CD8-positive, alpha-beta T cell (primary cell): ENCODE measurements at regions of chr4 and their contacts with region 1.

Region 1: DNA sequence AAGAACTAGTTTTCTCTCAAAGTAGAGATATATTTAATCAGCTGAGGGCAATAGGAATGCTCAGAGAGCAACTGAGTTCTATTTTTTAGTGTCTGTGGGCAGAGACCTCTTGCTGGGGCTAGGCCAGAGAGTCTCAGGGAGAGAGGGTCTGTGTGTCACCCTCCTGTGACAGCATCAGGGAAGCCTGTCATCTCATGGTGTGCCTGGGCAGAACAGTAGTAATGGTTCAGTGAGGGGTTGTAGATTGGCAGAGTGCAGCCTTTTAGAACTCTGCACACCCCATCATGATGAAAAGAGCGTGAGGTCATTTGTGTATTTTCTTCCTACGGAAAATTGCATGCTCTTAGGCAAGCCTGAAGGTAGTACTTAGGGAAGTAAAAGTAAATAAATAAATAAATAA is 1396.5 kb upstream of the AGA start:
- DNase-seq: no peak
- ATAC-seq: no peak
- H3K4me3 ChIP-seq: no peak overlapping the region
- H3K4me3 Mint-ChIP-seq: no peak overlapping the region
- H3K27ac ChIP-seq: no peak overlapping the region
- H3K27ac Mint-ChIP-seq: no peak overlapping the region
- H3K4me1 ChIP-seq: no peaks in the 10 kb centered on the region
- H3K4me1 Mint-ChIP-seq: no peaks in the 10 kb centered on the region
- H3K27me3 ChIP-seq: no peaks in the 10 kb centered on the region
- H3K27me3 Mint-ChIP-seq: no peaks in the 10 kb centered on the region
- CTCF ChIP-seq: no peak

Region 2: DNA sequence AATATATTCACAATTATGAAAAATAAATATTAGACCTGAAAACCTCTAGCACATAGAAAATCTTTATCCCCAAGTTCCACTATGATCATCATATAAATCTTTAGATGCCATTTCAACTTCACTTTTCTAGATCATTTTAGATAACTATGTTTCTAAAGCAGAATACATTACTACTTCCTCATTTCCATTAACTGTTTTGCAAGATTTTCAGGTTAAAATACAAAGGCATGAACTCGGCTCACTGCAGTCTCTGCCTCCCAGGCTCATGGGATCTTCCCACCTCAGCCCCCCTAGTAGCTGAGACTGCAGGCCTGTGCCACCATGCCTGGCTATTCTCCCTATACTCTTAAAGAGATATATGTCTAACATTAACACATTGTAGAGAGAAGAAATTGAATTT is 30.7 kb before region 1 on chr4:
- CTCF ChIA-PET with region 1: no interaction called
- POLR2A ChIA-PET with region 1: no interaction called
- intact Hi-C with region 1: loop called in 1 of 2 experiments (anchors 2 kb)
- DNase-seq: no peak
- ATAC-seq: no peak
- H3K4me3 ChIP-seq: no peak overlapping the region
- H3K4me3 Mint-ChIP-seq: no peak overlapping the region
- H3K27ac ChIP-seq: no peak overlapping the region
- H3K27ac Mint-ChIP-seq: no peak overlapping the region
- H3K4me1 ChIP-seq: no peaks in the 10 kb centered on the region
- H3K4me1 Mint-ChIP-seq: no peaks in the 10 kb centered on the region
- H3K27me3 ChIP-seq: no peaks in the 10 kb centered on the region
- H3K27me3 Mint-ChIP-seq: no peaks in the 10 kb centered on the region
- CTCF ChIP-seq: no peak

Region 3: GRCh38 chr4:178937130-178937529 is 98.4 kb after region 1 on chr4:
- CTCF ChIA-PET with region 1: no interaction called
- POLR2A ChIA-PET with region 1: no interaction called
- intact Hi-C with region 1: no loop called
- DNase-seq: no peak
- ATAC-seq: no peak
- H3K4me3 ChIP-seq: no peak overlapping the region
- H3K4me3 Mint-ChIP-seq: no peak overlapping the region
- H3K27ac ChIP-seq: no peak overlapping the region
- H3K27ac Mint-ChIP-seq: no peak overlapping the region
- H3K4me1 ChIP-seq: no peaks in the 10 kb centered on the region
- H3K4me1 Mint-ChIP-seq: no peaks in the 10 kb centered on the region
- H3K27me3 ChIP-seq: no peaks in the 10 kb centered on the region
- H3K27me3 Mint-ChIP-seq: no peaks in the 10 kb centered on the region
- CTCF ChIP-seq: no peak